ENCODE measurements at regions of chr9 and their contacts with region 1.

Region 1: GRCh38 chr9:88197781-88198340 is 59.6 kb upstream of the SPATA31C2 start:
- DNase-seq: no peak
- H3K4me3 ChIP-seq: peak overlapping the region in 2 of 3 donors; percentile 13 to 52
- H3K27ac ChIP-seq: peak overlapping the region in 1 of 2 donors; percentile 1
- H3K4me1 ChIP-seq: no peaks in the 10 kb centered on the region
- H3K27me3 ChIP-seq: no peaks in the 10 kb centered on the region
- CTCF ChIP-seq: no peak
- POLR2A ChIP-seq: no peak

Region 2: GRCh38 chr9:88623698-88624097 is 425.8 kb after region 1 on chr9:
- intact Hi-C with region 1: loop called (anchors 5 kb)
- DNase-seq: no peak
- H3K4me3 ChIP-seq: no peak overlapping the region
- H3K27ac ChIP-seq: no peak overlapping the region
- H3K4me1 ChIP-seq: no peaks in the 10 kb centered on the region
- H3K27me3 ChIP-seq: no peaks in the 10 kb centered on the region
- CTCF ChIP-seq: no peak
- POLR2A ChIP-seq: no peak

Region 3: DNA sequence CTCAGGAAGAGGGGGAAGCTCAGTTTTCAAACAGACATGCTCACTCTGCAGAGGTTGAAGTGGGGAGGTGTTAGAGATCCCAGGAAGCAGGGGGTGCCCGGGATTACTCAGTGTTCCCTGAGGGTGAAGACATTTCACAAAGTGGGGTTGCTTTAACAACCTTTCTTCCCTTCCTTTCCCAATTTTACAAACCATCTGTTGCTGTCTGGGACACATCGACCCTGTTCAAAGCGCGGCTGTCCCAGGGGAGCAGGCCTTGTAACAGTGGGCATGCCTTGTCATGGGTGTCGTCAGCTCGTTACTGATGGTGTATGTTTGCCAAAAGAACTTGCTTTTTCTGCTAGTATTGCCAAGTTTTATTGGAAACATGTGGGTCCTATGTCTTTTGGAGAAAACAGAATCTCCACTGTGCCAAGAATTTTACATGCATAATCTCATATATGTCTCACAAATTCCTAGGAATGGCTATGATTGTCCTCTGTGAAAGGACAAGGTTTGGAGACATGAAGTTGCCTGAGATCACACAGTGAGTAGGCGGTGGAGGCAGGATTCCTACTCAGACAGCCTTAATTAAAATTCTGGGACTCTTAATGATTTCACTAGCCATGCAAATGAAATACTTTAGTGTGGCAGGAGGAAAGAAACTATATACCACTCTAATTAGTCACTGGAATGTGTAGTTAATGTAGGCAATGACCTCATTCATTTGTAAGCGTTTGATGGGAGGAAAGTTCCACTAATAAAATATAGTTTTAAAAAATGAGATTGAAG is 536.0 kb after region 1 on chr9:
- intact Hi-C with region 1: no loop called
- DNase-seq: no peak
- H3K4me3 ChIP-seq: no peak overlapping the region
- H3K27ac ChIP-seq: peak overlapping the region in 1 of 2 donors; percentile 48
- H3K4me1 ChIP-seq: no peaks in the 10 kb centered on the region
- H3K27me3 ChIP-seq: no peaks in the 10 kb centered on the region
- CTCF ChIP-seq: no peak
- POLR2A ChIP-seq: no peak

Measured in breast epithelium (tissue), 4 donors.